ENCODE measurements at regions of chr6 and their contacts with region 1.

Region 1: GRCh38 chr6:75526502-75527127 is 33.0 kb upstream of the FILIP1 start:
- DNase-seq: peak; percentile 69
- H3K4me3 ChIP-seq: no peak overlapping the region
- H3K27ac ChIP-seq: no peak overlapping the region
- H3K4me1 ChIP-seq: no peaks in the 10 kb centered on the region
- H3K27me3 ChIP-seq: no peaks in the 10 kb centered on the region
- CTCF ChIP-seq: peak; percentile 54

Region 2: GRCh38 chr6:75012018-75012529 is 514.5 kb before region 1 on chr6:
- intact Hi-C with region 1: no loop called
- DNase-seq: no peak
- H3K4me3 ChIP-seq: no peak overlapping the region
- H3K27ac ChIP-seq: no peak overlapping the region
- H3K4me1 ChIP-seq: no peaks in the 10 kb centered on the region
- H3K27me3 ChIP-seq: no peaks in the 10 kb centered on the region
- CTCF ChIP-seq: no peak

Region 3: DNA sequence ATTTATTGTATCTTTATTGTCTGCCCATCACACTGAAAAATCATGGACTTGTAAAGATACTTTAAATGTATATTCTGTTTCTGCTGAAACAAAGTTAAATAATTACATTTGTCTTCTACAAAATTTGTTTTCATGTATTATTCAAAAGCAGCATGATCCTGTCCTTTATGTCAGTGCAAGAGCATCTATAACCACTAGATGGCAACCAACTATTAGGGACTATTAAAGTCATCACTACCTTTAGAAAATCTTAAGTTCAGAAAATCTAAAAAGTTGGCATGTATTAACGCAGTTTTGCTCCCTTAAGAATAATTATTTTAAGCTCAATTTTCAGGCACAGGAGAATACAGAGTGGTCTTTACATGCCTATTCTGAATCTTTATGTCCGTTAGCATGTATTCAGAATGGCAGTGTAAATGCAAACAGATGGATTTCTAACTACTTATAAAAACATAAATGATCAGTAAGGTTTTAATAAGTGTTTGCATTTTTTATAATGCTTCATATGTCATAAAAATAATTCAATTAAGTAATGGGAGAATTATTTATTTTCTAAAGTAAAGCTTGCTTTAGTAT is 259.8 kb before region 1 on chr6:
- intact Hi-C with region 1: loop called (anchors 5 kb)
- DNase-seq: no peak
- H3K4me3 ChIP-seq: no peak overlapping the region
- H3K27ac ChIP-seq: no peak overlapping the region
- H3K4me1 ChIP-seq: no peaks in the 10 kb centered on the region
- H3K27me3 ChIP-seq: no peaks in the 10 kb centered on the region
- CTCF ChIP-seq: peak; percentile 82

Region 4: DNA sequence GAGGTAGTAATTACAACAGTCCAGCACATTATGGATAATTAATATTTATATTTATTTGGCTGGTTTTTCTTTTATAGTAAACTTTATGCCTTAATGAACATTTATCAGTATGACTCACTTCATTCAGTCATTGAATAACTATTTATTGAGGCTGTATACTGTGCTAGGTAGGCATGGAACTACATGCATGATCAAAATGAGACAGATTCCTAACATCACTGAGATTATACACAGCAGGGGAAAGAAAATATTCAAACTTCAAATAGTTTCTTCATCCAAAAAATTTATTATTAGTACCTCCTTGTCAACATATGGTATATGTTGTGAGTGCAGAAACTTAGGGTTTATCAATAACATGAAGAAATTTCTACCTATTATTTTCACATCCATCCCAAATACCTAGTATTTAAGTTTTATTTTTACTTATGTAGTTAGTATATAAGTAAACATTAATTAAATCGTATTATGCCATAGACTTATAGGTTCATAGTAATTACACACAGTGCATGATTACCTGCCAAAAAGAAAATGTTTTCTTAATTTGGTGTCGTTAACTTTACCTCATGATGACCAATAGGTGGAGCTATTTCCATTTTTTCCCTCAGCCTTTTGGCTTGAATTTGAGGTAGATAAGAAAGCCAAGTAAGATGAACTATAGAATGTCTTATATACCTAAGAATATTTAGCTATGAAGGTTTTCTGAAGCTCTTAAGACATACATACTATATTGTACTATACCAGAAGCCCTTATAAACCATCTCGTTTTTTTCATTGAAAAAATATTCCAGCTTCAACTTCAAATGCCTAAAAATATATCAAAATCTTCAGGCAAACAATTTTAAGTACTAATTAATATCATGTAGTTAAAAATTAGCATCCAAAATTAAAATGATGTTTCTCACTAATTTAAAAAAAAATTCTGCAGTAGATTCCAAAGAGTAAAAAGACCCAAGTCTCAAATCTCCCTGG is 229.5 kb before region 1 on chr6:
- intact Hi-C with region 1: loop called (anchors 2 kb)
- DNase-seq: no peak
- H3K4me3 ChIP-seq: no peak overlapping the region
- H3K27ac ChIP-seq: no peak overlapping the region
- H3K4me1 ChIP-seq: no peaks in the 10 kb centered on the region
- H3K27me3 ChIP-seq: no peaks in the 10 kb centered on the region
- CTCF ChIP-seq: peak; percentile 57

Region 5: GRCh38 chr6:75349262-75349984 is 177.2 kb before region 1 on chr6:
- intact Hi-C with region 1: no loop called
- DNase-seq: no peak
- H3K4me3 ChIP-seq: peak overlapping the region; percentile 19
- H3K27ac ChIP-seq: no peak overlapping the region
- H3K4me1 ChIP-seq: no peaks in the 10 kb centered on the region
- H3K27me3 ChIP-seq: no peaks in the 10 kb centered on the region
- CTCF ChIP-seq: no peak

Region 6: GRCh38 chr6:75368151-75368779 is 158.3 kb before region 1 on chr6:
- intact Hi-C with region 1: loop called (anchors 5 kb)
- DNase-seq: peak; percentile 29
- H3K4me3 ChIP-seq: no peak overlapping the region
- H3K27ac ChIP-seq: no peak overlapping the region
- H3K4me1 ChIP-seq: no peaks in the 10 kb centered on the region
- H3K27me3 ChIP-seq: no peaks in the 10 kb centered on the region
- CTCF ChIP-seq: no peak

Measured in colonic mucosa (tissue), 4 donors.